Testis (tissue), 5 donors: ENCODE measurements at regions of chr12 and their contacts with region 1.

Region 1: GRCh38 chr12:131116391-131117117 is 162.8 kb downstream of the ADGRD1 start:
- DNase-seq: peak; percentile 55
- H3K4me3 ChIP-seq: no peak overlapping the region
- H3K27ac ChIP-seq: peak overlapping the region; percentile 17 to 72
- H3K4me1 ChIP-seq: peaks cover 41% of the 10 kb centered on the region
- H3K27me3 ChIP-seq: no peaks in the 10 kb centered on the region
- CTCF ChIP-seq: peak in 2 of 3 experiments; percentile 25 to 50
- POLR2A ChIP-seq: no peak

Region 2: DNA sequence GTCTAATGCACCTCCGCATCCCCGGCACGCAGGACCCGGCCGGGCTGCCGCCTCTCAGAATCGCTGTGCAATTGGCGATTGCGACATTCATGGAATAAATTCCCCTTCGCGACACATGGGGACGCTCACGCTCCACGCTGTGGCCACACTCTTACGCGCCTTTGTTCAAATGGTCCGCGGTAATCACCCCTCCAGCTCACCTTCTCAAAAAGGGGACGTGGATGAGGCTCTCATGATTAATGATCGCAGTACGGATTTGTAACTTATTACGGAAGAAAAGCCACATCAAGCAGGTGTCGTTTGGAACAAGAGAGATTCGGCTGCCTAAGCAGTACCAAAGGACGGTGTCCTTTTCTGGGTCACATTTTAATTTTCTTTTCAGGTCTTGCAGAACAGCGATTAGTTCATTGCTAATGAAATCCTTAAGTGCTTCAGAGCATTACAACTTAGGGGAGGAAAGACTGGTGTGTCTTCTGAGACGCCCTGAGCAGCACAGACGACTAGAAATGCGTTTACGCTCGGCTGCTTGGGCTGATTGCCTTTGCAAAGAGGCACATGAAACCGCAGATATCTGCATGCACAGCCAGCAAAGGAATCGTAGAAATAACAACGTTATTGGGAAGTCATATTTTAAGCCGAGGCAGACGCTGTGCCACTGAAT is 200.2 kb before region 1 on chr12:
- intact Hi-C with region 1: loop called (anchors 10 kb)
- DNase-seq: peak; percentile 70
- H3K4me3 ChIP-seq: no peak overlapping the region
- H3K27ac ChIP-seq: no peak overlapping the region
- H3K4me1 ChIP-seq: no peaks in the 10 kb centered on the region
- H3K27me3 ChIP-seq: no peaks in the 10 kb centered on the region
- CTCF ChIP-seq: peak; percentile 82 to 96 (median 93)
- POLR2A ChIP-seq: no peak